ENCODE measurements at regions of chr2 and their contacts with region 1.

Region 1: GRCh38 chr2:201116115-201116958 is at the start of gene CFLAR:
- DNase-seq: peak; percentile 96
- H3K4me3 Mint-ChIP-seq: peak within 1 kb of the TSS; percentile 96
- H3K27ac Mint-ChIP-seq: peak within 1 kb of the TSS; percentile 97
- H3K4me1 Mint-ChIP-seq: peaks cover 32% of the 10 kb centered on the region
- H3K27me3 Mint-ChIP-seq: no peaks in the 10 kb centered on the region
- total RNA-seq, gene CFLAR: 402 and 415 TPM in 2 replicates

Region 2: DNA sequence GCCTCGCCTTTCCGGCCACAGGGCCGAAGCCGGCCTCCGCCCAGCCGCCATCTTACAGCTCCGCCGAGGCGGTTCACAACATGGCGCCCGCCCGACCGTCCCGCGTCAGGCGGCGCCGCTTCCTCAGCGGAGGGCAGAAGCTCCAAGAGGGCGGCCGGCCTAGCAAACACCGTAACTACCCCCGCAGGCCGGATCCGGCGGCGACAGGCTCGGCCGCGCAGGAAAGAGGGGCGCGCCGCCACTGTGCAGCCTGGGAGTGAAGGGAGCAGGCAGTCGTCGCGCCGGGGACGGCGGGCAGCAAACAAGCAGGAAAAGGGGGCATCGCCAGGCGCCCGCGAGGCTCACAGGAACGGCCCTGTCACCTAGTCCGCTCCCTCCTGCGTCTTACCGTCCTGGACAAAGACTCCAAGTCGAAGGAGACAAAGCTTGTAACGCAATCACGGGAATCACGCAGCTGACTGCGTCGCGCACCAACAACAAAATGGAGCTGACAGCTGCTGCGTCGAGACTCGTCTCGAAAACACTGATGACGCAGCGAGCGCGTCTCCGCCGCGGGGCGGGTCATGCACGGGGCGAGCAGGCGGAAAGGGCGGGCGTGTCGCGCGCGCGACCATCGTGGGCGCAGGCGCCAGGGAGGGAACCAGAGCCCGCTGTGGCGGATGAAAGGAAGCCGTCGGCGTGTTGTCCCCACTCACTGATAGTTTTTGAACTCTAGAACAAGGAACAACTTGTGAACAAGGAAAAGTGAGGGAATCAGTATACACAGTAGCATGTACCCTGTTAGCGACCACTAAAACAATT is 252.0 kb before region 1 on chr2 and contains the start of gene CLK1:
- intact Hi-C with region 1: loop called (anchors 2 kb)
- DNase-seq: peak; percentile 99
- H3K4me3 Mint-ChIP-seq: peak within 1 kb of the TSS; percentile 91
- H3K27ac Mint-ChIP-seq: peak within 1 kb of the TSS; percentile 94
- H3K4me1 Mint-ChIP-seq: peaks cover 32% of the 10 kb centered on the region
- H3K27me3 Mint-ChIP-seq: no peaks in the 10 kb centered on the region
- total RNA-seq, gene CLK1: 99.3 and 100 TPM in 2 replicates

Region 3: GRCh38 chr2:201130524-201131186 is 14.3 kb after region 1 on chr2:
- intact Hi-C with region 1: loop called (anchors 1 kb)
- DNase-seq: peak; percentile 80
- H3K4me3 Mint-ChIP-seq: peak overlapping the region; percentile 81
- H3K27ac Mint-ChIP-seq: peak overlapping the region; percentile 100
- H3K4me1 Mint-ChIP-seq: peaks cover 51% of the 10 kb centered on the region
- H3K27me3 Mint-ChIP-seq: no peaks in the 10 kb centered on the region

Region 4: DNA sequence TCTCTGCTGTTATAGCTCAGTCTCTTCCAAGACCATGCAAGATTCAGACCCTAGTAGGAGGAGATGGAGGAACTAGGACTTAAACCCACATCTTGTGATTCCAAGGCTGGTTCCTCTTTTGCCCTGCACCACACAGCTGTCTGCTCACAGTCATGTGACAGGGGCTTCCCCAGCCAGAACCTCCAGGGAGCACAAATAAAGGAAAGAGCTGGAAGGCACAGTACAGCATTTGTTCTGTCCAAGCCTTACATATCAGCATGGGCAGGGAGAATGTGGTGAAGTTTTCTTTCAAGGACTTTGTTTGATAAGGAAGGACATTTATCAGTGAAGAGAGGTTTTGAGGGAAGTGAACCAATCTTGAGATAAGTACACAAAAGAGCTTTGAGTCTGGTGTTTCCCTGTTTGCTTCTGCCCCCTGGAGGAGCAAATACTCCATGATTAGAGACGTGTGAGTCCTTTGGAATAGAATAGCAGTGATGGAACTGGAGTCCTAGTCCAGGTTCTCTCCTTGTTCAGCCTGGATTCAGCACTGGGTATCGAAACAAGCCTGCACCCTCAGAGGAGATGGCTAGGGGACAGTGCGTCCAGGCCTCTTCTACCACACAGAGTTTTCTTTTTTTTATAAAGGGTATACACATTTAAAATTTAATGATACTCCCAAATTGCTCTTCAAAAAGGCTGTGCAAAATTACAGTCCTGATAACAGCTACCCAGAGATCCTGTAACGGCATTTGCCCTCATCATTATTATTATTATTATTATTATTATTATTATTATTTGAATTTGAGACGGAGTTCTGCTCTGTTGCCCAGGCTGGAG is 42.0 kb after region 1 on chr2:
- intact Hi-C with region 1: loop called (anchors 1 kb)
- DNase-seq: peak; percentile 89
- H3K4me3 Mint-ChIP-seq: peak overlapping the region; percentile 42
- H3K27ac Mint-ChIP-seq: peak overlapping the region; percentile 77
- H3K4me1 Mint-ChIP-seq: peaks cover 18% of the 10 kb centered on the region
- H3K27me3 Mint-ChIP-seq: no peaks in the 10 kb centered on the region

Region 5: DNA sequence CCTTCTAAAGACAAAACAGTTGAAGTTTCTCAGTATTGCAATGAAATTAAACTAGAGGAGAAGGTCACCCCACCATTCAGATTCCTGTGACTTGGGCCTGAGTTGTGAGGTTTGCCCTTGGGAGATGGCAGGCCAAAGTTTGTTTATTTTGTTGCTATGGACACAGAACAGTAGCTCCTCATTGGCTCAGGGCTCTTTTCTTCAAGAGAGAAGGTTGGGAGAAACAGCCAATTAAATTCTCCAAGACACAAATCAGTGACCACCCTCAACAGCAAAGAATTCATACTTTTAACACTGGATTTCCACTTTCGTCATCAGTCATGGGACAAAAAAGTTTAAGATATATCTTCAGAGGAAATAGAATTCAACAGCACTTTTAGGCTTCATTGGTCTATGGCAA is 240.9 kb after region 1 on chr2 and contains the start of gene FLACC1:
- intact Hi-C with region 1: no loop called
- DNase-seq: no peak
- H3K4me3 Mint-ChIP-seq: no peak within 1 kb of the TSS
- H3K27ac Mint-ChIP-seq: no peak within 1 kb of the TSS
- H3K4me1 Mint-ChIP-seq: peaks cover 28% of the 10 kb centered on the region
- H3K27me3 Mint-ChIP-seq: no peaks in the 10 kb centered on the region
- total RNA-seq, gene FLACC1: 1.1 and 1.4 TPM in 2 replicates

Measured in activated CD4-positive, alpha-beta T cell treated with anti-CD3 and anti-CD28 coated beads, Interleukin-2, amount 10 ng/mL, durations not matched to agents 24 days and 14 days (primary cell).